Common myeloid progenitor, CD34-positive (primary cell): ENCODE measurements at regions of chr10 and their contacts with region 1.

Region 1: DNA sequence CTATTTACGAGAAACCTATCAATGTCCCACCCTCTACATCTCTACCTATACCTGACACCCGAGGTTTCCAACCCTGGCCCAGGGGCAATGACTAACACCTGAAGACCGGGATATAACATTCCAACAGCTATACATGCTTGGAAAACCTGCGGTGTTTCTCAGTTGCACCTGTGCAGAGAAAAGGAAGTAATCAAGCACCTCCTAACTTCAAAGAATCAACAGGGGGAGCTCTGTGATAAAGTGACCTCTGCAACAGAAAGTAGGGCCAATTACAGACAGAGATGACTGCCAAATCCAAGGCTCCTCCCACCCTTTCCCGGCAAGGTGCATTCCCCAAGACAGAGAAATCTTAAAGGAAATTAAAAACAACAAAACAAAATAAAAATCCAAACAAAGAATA is 41.3 kb downstream of the CCDC6 start:
- DNase-seq: peak; percentile 58 to 60 (median 60)
- H3K4me3 ChIP-seq: peak overlapping the region in 1 of 7 experiments; percentile 35
- H3K27ac ChIP-seq: no peak overlapping the region
- H3K4me1 ChIP-seq: peaks cover 5 to 19% (median 8%) of the 10 kb centered on the region in 4 experiments
- H3K27me3 ChIP-seq: no peaks in the 10 kb centered on the region

Region 2: GRCh38 chr10:59830601-59831259 is 34.4 kb before region 1 on chr10:
- CTCF ChIA-PET with region 1: interaction called, 67 read pairs
- POLR2A ChIA-PET with region 1: no interaction called
- DNase-seq: peak; percentile 55 to 62 (median 59)
- H3K4me3 ChIP-seq: no peak overlapping the region
- H3K27ac ChIP-seq: peak overlapping the region; percentile 94
- H3K4me1 ChIP-seq: peaks cover 40 to 94% (median 66%) of the 10 kb centered on the region in 4 experiments
- H3K27me3 ChIP-seq: no peaks in the 10 kb centered on the region

Region 3: DNA sequence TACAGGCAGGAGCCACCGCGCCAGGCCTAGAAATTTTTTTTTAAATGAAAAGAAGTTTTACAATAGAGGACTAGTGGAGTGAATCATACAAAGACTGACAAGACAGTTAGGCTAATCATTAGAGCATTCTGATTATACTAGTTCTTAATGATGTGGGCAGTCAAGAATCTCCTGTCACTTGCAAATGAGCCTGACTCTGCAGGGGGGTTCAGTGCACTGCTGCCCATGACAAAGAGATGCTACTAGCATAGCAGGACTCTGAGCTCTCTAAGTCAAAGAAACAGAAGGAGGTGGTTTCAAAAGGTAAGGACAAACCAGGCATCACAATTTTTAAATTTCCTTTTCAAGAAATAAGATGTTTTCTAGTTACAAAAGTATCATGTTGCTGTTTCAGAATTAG is 17.8 kb before region 1 on chr10:
- CTCF ChIA-PET with region 1: interaction called, 55 read pairs
- POLR2A ChIA-PET with region 1: no interaction called
- DNase-seq: no peak
- H3K4me3 ChIP-seq: no peak overlapping the region
- H3K27ac ChIP-seq: no peak overlapping the region
- H3K4me1 ChIP-seq: peaks cover 15 to 46% (median 20%) of the 10 kb centered on the region in 4 experiments
- H3K27me3 ChIP-seq: no peaks in the 10 kb centered on the region

Region 4: DNA sequence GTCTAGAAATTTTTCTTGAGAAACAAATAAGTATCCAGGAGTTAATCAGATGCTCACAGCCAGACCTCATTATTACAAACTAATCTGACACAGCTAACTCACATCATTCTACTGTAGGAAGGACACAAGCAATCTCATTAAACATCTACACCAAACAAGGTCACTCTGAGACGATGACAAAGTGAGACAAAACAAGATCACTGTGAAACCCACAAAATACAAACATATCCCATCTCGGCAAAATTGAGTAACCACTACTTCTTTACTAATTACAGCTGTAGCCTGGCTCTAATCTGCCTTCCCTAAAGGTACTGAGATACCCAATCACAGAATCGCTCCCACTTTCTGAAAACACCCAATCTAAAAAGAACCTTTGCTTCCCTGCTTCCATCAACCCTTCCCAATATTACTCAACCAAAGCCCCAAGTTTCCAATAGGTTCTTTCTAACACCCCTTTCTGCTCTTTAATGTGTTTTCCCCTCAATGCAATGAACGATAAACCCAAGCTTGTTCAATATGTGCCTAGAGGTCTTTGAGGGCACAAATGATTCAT is 14.3 kb after region 1 on chr10:
- CTCF ChIA-PET with region 1: interaction called, 13 read pairs
- POLR2A ChIA-PET with region 1: no interaction called
- DNase-seq: no peak
- H3K4me3 ChIP-seq: no peak overlapping the region
- H3K27ac ChIP-seq: no peak overlapping the region
- H3K4me1 ChIP-seq: peaks cover 0 to 34% (median 16%) of the 10 kb centered on the region in 4 experiments
- H3K27me3 ChIP-seq: no peaks in the 10 kb centered on the region

Region 5: DNA sequence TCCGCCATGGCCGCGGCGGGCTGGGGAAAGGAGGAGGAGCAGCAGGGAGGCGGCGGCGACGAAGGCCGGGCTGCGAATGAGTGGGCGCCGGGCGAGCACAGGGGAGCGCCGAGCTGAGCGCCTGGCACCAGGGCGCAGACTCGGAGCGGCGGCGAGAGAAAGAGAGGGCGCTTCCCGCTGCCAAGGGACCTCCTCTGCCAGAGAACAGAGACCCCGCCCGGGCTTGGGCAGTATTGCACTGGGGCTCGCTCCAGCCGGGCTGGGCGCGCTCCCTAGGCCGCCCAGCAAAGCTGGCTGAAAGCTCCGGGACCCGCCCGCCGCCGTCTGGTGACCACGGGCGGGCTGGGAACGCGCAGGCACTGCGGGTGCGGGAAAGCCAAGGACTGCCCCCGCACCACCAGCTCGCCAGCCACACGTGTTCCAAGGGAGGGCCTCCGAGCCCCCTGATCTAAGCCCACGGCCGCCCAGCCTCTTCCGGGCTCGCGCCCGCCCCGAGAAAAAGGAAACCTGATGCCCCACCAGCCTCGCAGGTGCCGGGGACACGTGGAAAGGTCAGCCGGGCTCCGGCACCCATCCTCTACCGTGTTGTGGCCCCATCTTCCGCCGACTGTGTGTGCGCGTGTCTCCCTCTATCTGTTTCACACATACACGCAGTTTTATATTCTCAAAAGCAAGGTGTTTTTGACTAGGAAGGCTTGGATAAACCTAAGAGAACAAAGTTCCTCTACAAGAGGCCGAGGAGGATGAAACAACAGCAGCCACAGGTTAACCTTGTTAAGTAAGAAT is 41.5 kb after region 1 on chr10 and contains the start of gene CCDC6:
- CTCF ChIA-PET with region 1: interaction called, 63 read pairs
- POLR2A ChIA-PET with region 1: interaction called, 7 read pairs
- DNase-seq: peak; percentile 95 to 97 (median 95)
- H3K4me3 ChIP-seq: peak within 1 kb of the TSS; percentile 75 to 100 (median 98)
- H3K27ac ChIP-seq: peak within 1 kb of the TSS; percentile 76 to 87
- H3K4me1 ChIP-seq: peaks cover 29 to 48% (median 40%) of the 10 kb centered on the region in 4 experiments
- H3K27me3 ChIP-seq: no peaks in the 10 kb centered on the region

Region 6: GRCh38 chr10:60032723-60033122 is 167.6 kb after region 1 on chr10:
- CTCF ChIA-PET with region 1: interaction called, 19 read pairs
- POLR2A ChIA-PET with region 1: no interaction called
- DNase-seq: peak; percentile 68 to 84 (median 84)
- H3K4me3 ChIP-seq: no peak overlapping the region
- H3K27ac ChIP-seq: no peak overlapping the region
- H3K4me1 ChIP-seq: peaks cover 0 to 26% (median 10%) of the 10 kb centered on the region in 4 experiments
- H3K27me3 ChIP-seq: no peaks in the 10 kb centered on the region

Region 7: GRCh38 chr10:60130130-60130579 is 265.1 kb after region 1 on chr10:
- CTCF ChIA-PET with region 1: no interaction called
- POLR2A ChIA-PET with region 1: no interaction called
- DNase-seq: peak in 2 of 3 donors; percentile 47 to 62
- H3K4me3 ChIP-seq: no peak overlapping the region
- H3K27ac ChIP-seq: peak overlapping the region in 1 of 2 experiments; percentile 57
- H3K4me1 ChIP-seq: peaks cover 5 to 7% (median 6%) of the 10 kb centered on the region in 4 experiments
- H3K27me3 ChIP-seq: no peaks in the 10 kb centered on the region